A673 (cell line): ENCODE measurements at regions of chr20 and their contacts with region 1.

Region 1: DNA sequence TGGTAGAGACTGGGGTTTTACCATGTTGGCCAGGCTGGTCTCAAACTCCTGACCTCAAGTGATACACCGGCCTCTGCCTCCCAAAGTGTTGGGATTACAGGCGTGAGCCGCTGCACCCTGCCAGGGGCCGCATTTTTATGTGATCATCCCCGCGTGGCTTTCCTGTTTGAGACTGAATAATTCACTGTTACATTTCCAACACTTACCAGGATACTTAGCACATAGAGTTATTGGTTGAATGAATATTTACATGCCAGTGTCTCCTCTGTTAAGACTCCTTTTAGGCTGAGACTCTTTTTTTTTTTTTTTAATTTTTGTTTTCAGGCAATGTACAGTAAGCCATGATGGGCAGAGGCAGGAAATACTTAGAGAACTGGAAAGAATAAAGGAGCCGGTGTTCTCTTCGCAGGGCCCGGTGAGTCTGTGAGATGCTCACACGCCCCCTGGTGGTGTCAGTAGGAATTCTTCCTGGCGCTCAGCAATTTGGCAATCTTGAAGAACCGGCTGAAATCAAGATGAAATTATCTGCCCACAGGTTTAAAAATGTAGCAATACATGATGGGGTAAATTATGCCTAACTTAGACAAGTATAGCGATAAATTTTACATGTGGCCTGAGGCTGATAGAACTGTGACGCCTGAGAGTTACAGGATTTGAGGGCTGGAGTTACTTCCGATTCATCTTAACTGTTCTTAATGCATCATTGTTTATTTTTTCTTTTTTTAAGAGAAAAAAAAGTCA is 7.6 kb upstream of the RNF114 start:
- DNase-seq: peak; percentile 91
- H3K4me3 ChIP-seq: no peak overlapping the region
- H3K27ac ChIP-seq: no peak overlapping the region
- H3K4me1 ChIP-seq: no peaks in the 10 kb centered on the region
- H3K27me3 ChIP-seq: no peaks in the 10 kb centered on the region
- CTCF ChIP-seq: peak; percentile 91

Region 2: GRCh38 chr20:49610701-49611538 is 317.7 kb before region 1 on chr20:
- CTCF ChIA-PET with region 1: interaction called, 7 read pairs
- POLR2A ChIA-PET with region 1: no interaction called
- intact Hi-C with region 1: loop called (anchors 2 kb)
- DNase-seq: peak; percentile 77
- H3K4me3 ChIP-seq: peak overlapping the region; percentile 32
- H3K27ac ChIP-seq: no peak overlapping the region
- H3K4me1 ChIP-seq: no peaks in the 10 kb centered on the region
- H3K27me3 ChIP-seq: no peaks in the 10 kb centered on the region
- CTCF ChIP-seq: peak; percentile 99